AG04449 (cell line): ENCODE measurements at regions of chr7 and their contacts with region 1.

Region 1: DNA sequence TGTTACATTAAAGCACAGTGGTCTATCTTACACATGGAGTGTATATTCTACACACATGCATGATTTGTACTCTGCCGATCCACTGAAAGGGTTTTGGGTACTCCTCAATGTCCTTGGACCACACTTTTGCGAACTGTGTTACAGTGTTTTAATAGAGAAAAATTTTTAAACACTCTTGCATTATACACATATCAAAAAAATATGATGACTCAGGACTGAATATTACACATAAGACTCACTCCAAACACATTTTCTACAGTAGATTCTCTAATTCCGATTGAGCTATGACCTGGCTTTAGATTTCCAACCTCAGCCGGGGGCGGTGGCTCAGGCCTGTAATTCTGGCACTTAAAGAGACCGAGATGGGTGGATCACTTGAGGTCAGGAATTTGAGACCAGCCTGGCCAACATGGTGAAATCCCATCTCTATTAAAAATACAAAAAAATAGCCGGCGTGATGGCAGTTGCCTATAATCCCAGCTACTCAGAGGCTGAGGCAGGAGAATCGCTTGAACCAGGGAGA is 222.4 kb downstream of the CACNA2D1 start:
- DNase-seq: no peak
- H3K4me3 ChIP-seq: no peak overlapping the region
- CTCF ChIP-seq: no peak

Region 2: DNA sequence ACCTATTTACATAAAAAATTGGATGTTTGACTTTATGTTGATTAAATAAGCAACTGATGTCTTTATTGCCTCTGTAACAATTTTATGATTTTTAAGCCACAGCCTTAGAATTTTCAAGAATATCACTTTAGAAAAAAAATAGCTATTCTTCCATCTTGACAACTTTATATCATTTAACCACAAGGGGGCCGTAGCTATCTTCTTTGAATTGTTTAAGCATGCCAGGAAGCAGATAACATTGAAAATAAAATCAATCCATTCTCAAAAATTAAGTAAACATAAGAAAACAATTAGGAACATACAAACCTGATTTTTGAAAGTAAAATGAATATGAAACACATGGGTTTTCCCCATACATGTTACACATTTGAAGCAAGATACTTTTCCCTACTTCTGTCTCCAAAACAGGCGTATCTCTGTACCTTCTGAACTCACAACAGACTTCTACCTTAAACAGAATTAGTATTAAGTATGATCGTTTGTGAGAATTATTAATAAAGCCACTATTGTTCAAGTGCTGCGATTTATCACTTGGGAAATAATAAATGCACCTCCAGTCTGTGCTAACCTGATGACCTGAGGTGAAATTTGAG is 13.3 kb after region 1 on chr7:
- CTCF ChIA-PET with region 1: interaction called, 10 read pairs
- POLR2A ChIA-PET with region 1: no interaction called
- DNase-seq: no peak
- H3K4me3 ChIP-seq: no peak overlapping the region
- CTCF ChIP-seq: peak; percentile 27